ENCODE measurements at regions of chr19 and their contacts with region 1.

Region 1: DNA sequence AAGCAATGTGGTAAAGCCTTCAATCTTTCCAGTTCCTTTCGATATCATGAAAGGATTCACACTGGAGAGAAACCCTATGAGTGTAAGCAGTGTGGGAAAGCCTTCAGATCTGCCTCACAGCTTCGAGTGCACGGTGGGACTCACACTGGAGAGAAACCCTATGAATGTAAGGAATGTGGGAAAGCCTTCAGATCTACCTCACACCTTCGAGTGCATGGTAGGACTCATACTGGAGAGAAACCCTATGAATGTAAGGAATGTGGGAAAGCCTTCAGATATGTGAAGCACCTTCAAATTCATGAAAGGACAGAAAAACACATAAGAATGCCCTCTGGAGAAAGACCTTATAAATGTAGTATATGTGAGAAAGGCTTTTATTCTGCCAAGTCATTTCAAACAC is 15.6 kb upstream of the ZNF763 start:
- DNase-seq: no peak
- H3K4me3 ChIP-seq: no peak overlapping the region
- H3K27ac ChIP-seq: no peak overlapping the region
- H3K4me1 ChIP-seq: no peaks in the 10 kb centered on the region
- H3K27me3 ChIP-seq: no peaks in the 10 kb centered on the region
- CTCF ChIP-seq: no peak
- EP300 ChIP-seq: no peak
- POLR2A ChIP-seq: no peak
- RAD21 ChIP-seq: no peak

Region 2: GRCh38 chr19:11902228-11902627 is 47.0 kb before region 1 on chr19:
- CTCF ChIA-PET with region 1: no interaction called
- POLR2A ChIA-PET with region 1: no interaction called
- DNase-seq: no peak
- H3K4me3 ChIP-seq: no peak overlapping the region
- H3K27ac ChIP-seq: no peak overlapping the region
- H3K4me1 ChIP-seq: no peaks in the 10 kb centered on the region
- H3K27me3 ChIP-seq: no peaks in the 10 kb centered on the region
- CTCF ChIP-seq: no peak
- EP300 ChIP-seq: no peak
- POLR2A ChIP-seq: no peak
- RAD21 ChIP-seq: no peak

Region 3: GRCh38 chr19:11964858-11965645 is 15.9 kb after region 1 on chr19 and contains the start of gene ZNF763:
- CTCF ChIA-PET with region 1: interaction called, 15 read pairs
- POLR2A ChIA-PET with region 1: interaction called, 6 read pairs
- DNase-seq: peak; percentile 89 to 96
- H3K4me3 ChIP-seq: peak within 1 kb of the TSS; percentile 66 to 76 (median 72)
- H3K27ac ChIP-seq: peak within 1 kb of the TSS; percentile 75; the same call in 1 of the 2 replicates
- H3K4me1 ChIP-seq: peaks cover 0 to 7% (median 4%) of the 10 kb centered on the region in 4 experiments; a peak in 5 of 7 replicates
- H3K27me3 ChIP-seq: peaks cover 0 to 13% (median 7%) of the 10 kb centered on the region in 4 experiments; a peak in 5 of 7 replicates
- CTCF ChIP-seq: no peak
- EP300 ChIP-seq: no peak
- POLR2A ChIP-seq: peak; percentile 71 to 91
- RAD21 ChIP-seq: no peak; a peak in 2 of 4 replicates
- total RNA-seq, gene ZNF763: 1.7 TPM in 2 replicates

Measured in H1 (cell line).